GM12878 (cell line): ENCODE measurements at regions of chr14 and their contacts with region 1.

Region 1: GRCh38 chr14:69460093-69460701 is 24.3 kb upstream of the PLEKHD1 start:
- DNase-seq: peak; percentile 25
- ATAC-seq: peak; percentile 96
- H3K4me3 ChIP-seq: no peak overlapping the region
- H3K27ac ChIP-seq: no peak overlapping the region
- H3K4me1 ChIP-seq: no peaks in the 10 kb centered on the region
- H3K27me3 ChIP-seq: no peaks in the 10 kb centered on the region
- CTCF ChIP-seq: peak; percentile 69 to 91 (median 81); a peak in 5 of 6 replicates
- EP300 ChIP-seq: no peak
- POLR2A ChIP-seq: no peak
- RAD21 ChIP-seq: peak; percentile 92

Region 2: GRCh38 chr14:69129264-69129880 is 330.8 kb before region 1 on chr14:
- CTCF ChIA-PET with region 1: interaction called, 35 read pairs
- POLR2A ChIA-PET with region 1: no interaction called
- RAD21 ChIA-PET with region 1: interaction called, 3 read pairs
- SMC1A ChIA-PET with region 1: interaction called, 5 read pairs
- in situ Hi-C with region 1: no loop called
- intact Hi-C with region 1: loop called (anchors 5 kb)
- DNase-seq: no peak
- ATAC-seq: peak; percentile 97
- H3K4me3 ChIP-seq: no peak overlapping the region
- H3K27ac ChIP-seq: no peak overlapping the region
- H3K4me1 ChIP-seq: peaks cover 8% of the 10 kb centered on the region; the same call in 1 of the 2 replicates
- H3K27me3 ChIP-seq: no peaks in the 10 kb centered on the region
- CTCF ChIP-seq: peak; percentile 91 to 98 (median 93)
- EP300 ChIP-seq: no peak
- POLR2A ChIP-seq: no peak
- RAD21 ChIP-seq: peak; percentile 92

Region 3: GRCh38 chr14:69260861-69261564 is 199.2 kb before region 1 on chr14:
- CTCF ChIA-PET with region 1: interaction called, 33 read pairs
- POLR2A ChIA-PET with region 1: no interaction called
- RAD21 ChIA-PET with region 1: interaction called, 34 read pairs
- SMC1A ChIA-PET with region 1: interaction called, 16 read pairs
- in situ Hi-C with region 1: no loop called
- intact Hi-C with region 1: loop called (anchors 2 kb)
- DNase-seq: no peak
- ATAC-seq: peak; percentile 91
- H3K4me3 ChIP-seq: no peak overlapping the region; the same call in 1 of the 2 replicates
- H3K27ac ChIP-seq: no peak overlapping the region
- H3K4me1 ChIP-seq: peaks cover 4% of the 10 kb centered on the region
- H3K27me3 ChIP-seq: peaks cover 22 to 25% of the 10 kb centered on the region in 2 experiments
- CTCF ChIP-seq: peak; percentile 38 to 67 (median 60)
- EP300 ChIP-seq: no peak
- POLR2A ChIP-seq: no peak
- RAD21 ChIP-seq: peak; percentile 54; the same call in 1 of the 2 replicates

Region 4: DNA sequence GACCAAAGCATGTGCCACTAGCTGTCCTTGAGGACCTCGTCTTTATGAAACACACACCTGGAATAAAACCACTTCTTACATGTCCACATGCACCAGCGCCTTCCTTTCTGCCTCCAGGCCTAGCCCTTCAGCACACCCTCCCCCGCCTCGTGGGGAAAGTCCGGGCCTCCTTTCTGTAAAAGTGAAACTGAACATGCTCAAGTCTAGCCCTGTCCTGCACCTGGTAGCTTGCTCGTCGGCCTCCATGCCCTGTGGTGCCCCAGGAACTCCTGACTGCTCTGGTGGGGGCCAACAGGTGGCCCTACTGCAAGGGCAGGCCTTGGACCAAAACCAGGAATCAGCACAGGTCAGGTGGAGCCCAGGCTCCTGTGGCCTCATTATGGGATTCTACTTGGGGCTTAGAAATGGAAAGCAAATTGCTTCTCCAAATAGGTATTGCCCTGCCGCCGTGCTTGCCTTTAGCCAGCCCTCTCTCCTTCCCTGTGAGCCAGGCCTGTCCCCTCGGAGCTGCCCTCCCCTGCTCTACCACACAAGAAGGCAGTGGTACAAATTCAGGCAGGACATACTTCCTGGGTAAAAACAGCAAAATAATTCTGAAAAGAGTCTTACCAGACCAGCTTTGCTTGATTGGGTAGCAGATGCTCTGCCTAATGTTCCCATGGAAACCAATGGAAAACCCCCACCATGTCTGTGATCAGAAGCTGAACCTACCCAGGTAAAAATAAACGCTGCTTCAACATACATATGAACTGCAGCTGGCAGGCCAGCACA is 105.6 kb before region 1 on chr14:
- CTCF ChIA-PET with region 1: interaction called, 15 read pairs
- POLR2A ChIA-PET with region 1: no interaction called
- RAD21 ChIA-PET with region 1: interaction called, 11 read pairs
- SMC1A ChIA-PET with region 1: interaction called, 5 read pairs
- in situ Hi-C with region 1: no loop called
- intact Hi-C with region 1: loop called (anchors 5 kb)
- DNase-seq: peak; percentile 87
- ATAC-seq: peak; percentile 90
- H3K4me3 ChIP-seq: peak overlapping the region; percentile 48; the same call in 1 of the 2 replicates
- H3K27ac ChIP-seq: peak overlapping the region; percentile 99
- H3K4me1 ChIP-seq: peaks cover 56% of the 10 kb centered on the region
- H3K27me3 ChIP-seq: no peaks in the 10 kb centered on the region
- CTCF ChIP-seq: no peak
- EP300 ChIP-seq: peak; percentile 28 to 58; a peak in 2 of 4 replicates
- POLR2A ChIP-seq: peak; percentile 78
- RAD21 ChIP-seq: no peak; the same call in 1 of the 2 replicates

Region 5: DNA sequence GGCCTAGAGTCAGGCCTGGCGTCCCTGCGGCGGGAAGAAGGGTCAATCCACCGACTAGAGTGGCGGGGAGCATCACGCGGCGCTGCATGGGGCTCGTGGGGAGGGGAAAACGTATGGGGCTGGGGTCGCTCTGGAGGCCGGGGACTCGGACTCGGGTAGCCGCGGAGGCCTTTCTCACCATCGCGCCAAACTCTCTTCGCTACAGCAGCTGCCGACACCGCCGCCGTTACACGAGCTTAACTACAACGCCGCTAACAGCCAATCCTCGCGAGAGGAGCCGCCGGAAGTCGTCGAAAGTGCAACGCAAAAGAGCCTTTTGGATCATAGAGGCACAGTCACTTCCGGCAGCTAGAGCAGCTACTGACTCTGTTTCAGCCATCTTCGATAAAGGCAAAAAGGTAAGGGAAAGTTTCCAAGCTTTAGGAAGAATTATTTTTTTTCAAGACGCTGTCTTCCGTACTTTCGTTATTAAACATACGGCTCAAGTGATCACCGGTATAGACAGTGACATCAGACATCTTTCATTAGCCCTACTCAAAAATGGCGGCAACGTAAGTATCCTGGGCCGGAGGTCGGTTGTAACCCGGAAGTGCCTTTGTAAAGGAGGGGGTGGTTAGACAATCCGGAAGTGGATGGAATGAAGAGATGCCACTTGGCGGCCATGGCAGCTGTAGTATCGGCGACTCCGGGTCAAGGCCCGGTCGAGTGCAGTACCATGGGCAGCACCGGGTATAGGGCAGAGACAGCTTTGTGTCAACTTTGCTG is 62.0 kb before region 1 on chr14 and contains the starts of genes ERH and SLC39A9:
- CTCF ChIA-PET with region 1: interaction called, 15 read pairs
- POLR2A ChIA-PET with region 1: interaction called, 4 read pairs
- RAD21 ChIA-PET with region 1: interaction called, 16 read pairs
- SMC1A ChIA-PET with region 1: interaction called, 13 read pairs
- in situ Hi-C with region 1: no loop called
- intact Hi-C with region 1: loop called (anchors 1 kb)
- DNase-seq: peak; percentile 97
- ATAC-seq: peak; percentile 85
- H3K4me3 ChIP-seq: peak within 1 kb of the TSS; percentile 98
- H3K27ac ChIP-seq: peak within 1 kb of the TSS; percentile 90
- H3K4me1 ChIP-seq: peaks cover 16% of the 10 kb centered on the region
- H3K27me3 ChIP-seq: no peaks in the 10 kb centered on the region
- CTCF ChIP-seq: no peak
- EP300 ChIP-seq: no peak
- POLR2A ChIP-seq: peak; percentile 91
- RAD21 ChIP-seq: no peak
- polyA plus RNA-seq, gene ERH: 538 to 852 TPM
- polyA plus RNA-seq, gene SLC39A9: 19.9 to 29.5 TPM

Region 6: GRCh38 chr14:69475194-69475818 is 15.1 kb after region 1 on chr14:
- CTCF ChIA-PET with region 1: interaction called, 15 read pairs
- POLR2A ChIA-PET with region 1: no interaction called
- RAD21 ChIA-PET with region 1: no interaction called
- SMC1A ChIA-PET with region 1: interaction called, 7 read pairs
- in situ Hi-C with region 1: no loop called
- intact Hi-C with region 1: no loop called
- DNase-seq: no peak
- ATAC-seq: peak; percentile 84
- H3K4me3 ChIP-seq: no peak overlapping the region
- H3K27ac ChIP-seq: no peak overlapping the region
- H3K4me1 ChIP-seq: no peaks in the 10 kb centered on the region
- H3K27me3 ChIP-seq: no peaks in the 10 kb centered on the region
- CTCF ChIP-seq: peak; percentile 51 to 57 (median 55)
- EP300 ChIP-seq: no peak
- POLR2A ChIP-seq: no peak
- RAD21 ChIP-seq: peak; percentile 34; the same call in 1 of the 2 replicates

Region 7: DNA sequence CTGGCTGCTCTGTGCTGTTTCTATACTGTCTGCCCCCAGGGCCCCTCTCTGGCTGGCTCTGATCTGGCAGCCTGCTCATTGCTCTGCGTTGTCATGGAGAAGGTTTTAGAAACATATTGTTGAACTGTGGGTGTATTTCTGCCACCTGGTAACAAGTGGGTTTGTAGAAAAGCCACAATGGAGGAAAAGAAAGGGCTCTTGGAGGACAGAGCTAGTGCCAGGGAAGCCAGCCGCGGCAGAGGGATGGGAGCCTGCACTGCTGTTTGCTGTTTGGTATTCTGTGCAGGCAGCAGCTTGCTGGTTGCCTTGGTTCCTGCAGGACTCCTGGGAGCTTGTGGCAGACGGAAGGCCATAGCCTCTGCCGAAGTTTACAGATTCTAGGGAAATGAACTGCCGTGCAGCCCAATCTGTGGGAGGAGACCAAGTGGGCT is 99.4 kb after region 1 on chr14:
- CTCF ChIA-PET with region 1: no interaction called
- POLR2A ChIA-PET with region 1: no interaction called
- RAD21 ChIA-PET with region 1: no interaction called
- SMC1A ChIA-PET with region 1: no interaction called
- in situ Hi-C with region 1: no loop called
- intact Hi-C with region 1: no loop called
- DNase-seq: no peak
- ATAC-seq: no peak
- H3K4me3 ChIP-seq: no peak overlapping the region
- H3K27ac ChIP-seq: no peak overlapping the region
- H3K4me1 ChIP-seq: no peaks in the 10 kb centered on the region
- H3K27me3 ChIP-seq: peaks cover 0 to 1% of the 10 kb centered on the region in 2 experiments; a peak in 2 of 4 replicates
- CTCF ChIP-seq: no peak
- EP300 ChIP-seq: no peak
- POLR2A ChIP-seq: no peak
- RAD21 ChIP-seq: no peak